ENCODE measurements at regions of chrX and their contacts with region 1.

Region 1: GRCh38 chrX:149563359-149563758 is 13.6 kb upstream of the HSFX3 start:
- DNase-seq: no peak
- H3K4me3 ChIP-seq: no peak overlapping the region
- H3K27ac ChIP-seq: no peak overlapping the region
- H3K4me1 ChIP-seq: no peaks in the 10 kb centered on the region
- H3K27me3 ChIP-seq: no peaks in the 10 kb centered on the region
- CTCF ChIP-seq: no peak
- EP300 ChIP-seq: no peak
- POLR2A ChIP-seq: no peak

Region 2: GRCh38 chrX:149010009-149010852 is 553.1 kb before region 1 on chrX:
- intact Hi-C with region 1: no loop called
- DNase-seq: no peak
- H3K4me3 ChIP-seq: no peak overlapping the region
- H3K27ac ChIP-seq: no peak overlapping the region
- H3K4me1 ChIP-seq: no peaks in the 10 kb centered on the region
- H3K27me3 ChIP-seq: no peaks in the 10 kb centered on the region
- CTCF ChIP-seq: no peak
- EP300 ChIP-seq: no peak
- POLR2A ChIP-seq: no peak

Region 3: GRCh38 chrX:149392903-149393594 is 170.3 kb before region 1 on chrX:
- intact Hi-C with region 1: no loop called
- DNase-seq: no peak
- H3K4me3 ChIP-seq: no peak overlapping the region
- H3K27ac ChIP-seq: no peak overlapping the region
- H3K4me1 ChIP-seq: no peaks in the 10 kb centered on the region
- H3K27me3 ChIP-seq: no peaks in the 10 kb centered on the region
- CTCF ChIP-seq: no peak
- EP300 ChIP-seq: no peak
- POLR2A ChIP-seq: no peak

Region 4: GRCh38 chrX:149628280-149628679 is 64.9 kb after region 1 on chrX:
- intact Hi-C with region 1: loop called (anchors 5 kb)
- DNase-seq: no peak
- H3K4me3 ChIP-seq: no peak overlapping the region
- H3K27ac ChIP-seq: no peak overlapping the region
- H3K4me1 ChIP-seq: peaks cover 11 to 31% (median 23%) of the 10 kb centered on the region in 4 donors
- H3K27me3 ChIP-seq: no peaks in the 10 kb centered on the region
- CTCF ChIP-seq: no peak
- EP300 ChIP-seq: no peak
- POLR2A ChIP-seq: no peak

Region 5: GRCh38 chrX:149881081-149881711 is 317.8 kb after region 1 on chrX and contains the start of gene MAGEA8:
- intact Hi-C with region 1: no loop called
- DNase-seq: no peak
- H3K4me3 ChIP-seq: no peak within 1 kb of the TSS
- H3K27ac ChIP-seq: no peak within 1 kb of the TSS
- H3K4me1 ChIP-seq: no peaks in the 10 kb centered on the region
- H3K27me3 ChIP-seq: no peaks in the 10 kb centered on the region
- CTCF ChIP-seq: no peak
- EP300 ChIP-seq: no peak
- POLR2A ChIP-seq: no peak
- total RNA-seq, gene MAGEA8: not detected

Measured in esophagus muscularis mucosa (tissue), 4 donors.